ENCODE measurements at regions of chr6 and their contacts with region 1.

Region 1: DNA sequence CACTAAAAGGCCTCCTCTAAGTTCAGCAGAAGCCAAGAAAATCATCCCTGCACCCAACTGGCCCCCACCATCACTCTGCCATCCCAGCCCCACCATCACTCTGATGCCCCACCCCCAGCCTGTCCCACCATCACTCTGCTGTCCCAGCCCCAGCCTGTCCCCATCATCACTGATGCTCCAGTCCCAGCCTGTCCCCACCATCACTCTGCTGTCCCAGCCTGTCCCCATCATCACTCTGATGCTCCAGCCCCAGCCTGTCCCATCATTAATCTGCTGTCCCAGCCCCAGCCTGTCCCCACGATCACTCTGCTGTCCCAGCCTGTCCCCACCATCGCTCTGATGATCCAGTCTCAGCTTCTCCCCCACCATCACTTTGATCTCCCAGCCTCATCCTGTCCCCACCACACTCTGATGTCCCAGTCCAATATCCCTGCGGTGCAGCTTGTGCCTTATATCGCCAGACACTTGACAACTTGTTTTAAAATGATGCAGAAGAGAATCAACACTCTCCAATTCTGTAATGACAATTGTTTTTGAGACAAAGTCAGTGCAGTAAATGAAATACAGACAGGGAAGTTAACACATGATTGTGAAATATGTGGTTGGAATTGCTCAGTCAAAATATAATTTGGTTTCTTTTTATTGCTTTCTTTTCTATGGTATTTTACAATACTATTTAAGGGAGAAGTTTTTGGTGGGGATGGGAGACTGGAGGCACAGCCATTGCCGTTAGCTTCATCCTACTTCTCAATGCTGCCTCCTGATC is 100.8 kb downstream of the TNFAIP3 start:
- DNase-seq: no peak
- H3K4me3 Mint-ChIP-seq: no peak overlapping the region
- H3K27ac Mint-ChIP-seq: peak overlapping the region; percentile 58
- H3K4me1 Mint-ChIP-seq: peaks cover 58% of the 10 kb centered on the region
- H3K27me3 Mint-ChIP-seq: no peaks in the 10 kb centered on the region

Region 2: GRCh38 chr6:137699031-137699683 is 268.7 kb before region 1 on chr6:
- intact Hi-C with region 1: loop called (anchors 2 kb)
- DNase-seq: no peak
- H3K4me3 Mint-ChIP-seq: peak overlapping the region; percentile 64
- H3K27ac Mint-ChIP-seq: peak overlapping the region; percentile 98
- H3K4me1 Mint-ChIP-seq: peaks cover 52% of the 10 kb centered on the region
- H3K27me3 Mint-ChIP-seq: no peaks in the 10 kb centered on the region

Region 3: DNA sequence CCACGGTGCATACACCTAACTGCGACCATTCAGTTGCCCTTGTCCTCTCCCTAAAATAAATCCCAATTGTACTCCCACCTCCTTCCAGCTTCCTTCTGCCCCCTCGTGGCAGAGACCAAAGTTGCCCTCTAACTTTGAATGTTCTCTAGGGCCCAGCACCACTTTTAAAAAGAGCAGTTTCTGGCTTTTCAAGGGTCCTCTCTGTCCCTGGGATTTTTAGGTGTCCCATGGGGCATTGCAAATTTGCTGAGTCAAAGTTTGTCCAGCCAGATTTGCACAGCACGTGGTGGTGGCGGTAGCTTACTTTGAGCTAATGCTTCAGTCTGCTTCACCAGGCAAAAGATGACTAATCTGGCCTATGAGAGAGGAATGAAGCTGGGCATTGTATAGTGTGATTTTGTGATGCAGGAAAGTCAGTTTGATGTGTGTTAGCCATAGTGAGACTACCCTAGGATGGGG is 39.2 kb after region 1 on chr6:
- intact Hi-C with region 1: no loop called
- DNase-seq: no peak
- H3K4me3 Mint-ChIP-seq: no peak overlapping the region
- H3K27ac Mint-ChIP-seq: no peak overlapping the region
- H3K4me1 Mint-ChIP-seq: peaks cover 7% of the 10 kb centered on the region
- H3K27me3 Mint-ChIP-seq: peaks cover 6% of the 10 kb centered on the region

Measured in activated T-helper 2 cell treated with anti-CD3 and anti-CD28 coated beads, Interferon-gamma antibody, Interleukin-2, Interleukin-4, amounts not matched to agents 10 μg/mL and 5 μg/mL and 100 μg/mL, durations not matched to agents 14 hours and 24 hours and 36 hours (primary cell).